ENCODE measurements at regions of chr6 and their contacts with region 1.

Region 1: GRCh38 chr6:119110601-119111548 is 32.4 kb upstream of the FAM184A start:
- DNase-seq: peak; percentile 57
- H3K4me3 Mint-ChIP-seq: no peak overlapping the region
- H3K27ac Mint-ChIP-seq: no peak overlapping the region
- H3K4me1 Mint-ChIP-seq: no peaks in the 10 kb centered on the region
- H3K27me3 Mint-ChIP-seq: no peaks in the 10 kb centered on the region
- CTCF ChIP-seq: peak; percentile 38

Region 2: GRCh38 chr6:118565311-118565960 is 545.4 kb before region 1 on chr6:
- CTCF ChIA-PET with region 1: interaction called, 8 read pairs
- intact Hi-C with region 1: loop called (anchors 1 kb)
- DNase-seq: peak; percentile 28
- H3K4me3 Mint-ChIP-seq: no peak overlapping the region
- H3K27ac Mint-ChIP-seq: no peak overlapping the region
- H3K4me1 Mint-ChIP-seq: no peaks in the 10 kb centered on the region
- H3K27me3 Mint-ChIP-seq: no peaks in the 10 kb centered on the region
- CTCF ChIP-seq: peak; percentile 27

Region 3: GRCh38 chr6:118864341-118865099 is 246.4 kb before region 1 on chr6:
- CTCF ChIA-PET with region 1: no interaction called
- intact Hi-C with region 1: no loop called
- DNase-seq: no peak
- H3K4me3 Mint-ChIP-seq: no peak overlapping the region
- H3K27ac Mint-ChIP-seq: no peak overlapping the region
- H3K4me1 Mint-ChIP-seq: peaks cover 14% of the 10 kb centered on the region
- H3K27me3 Mint-ChIP-seq: no peaks in the 10 kb centered on the region
- CTCF ChIP-seq: no peak

Region 4: GRCh38 chr6:118893807-118894424 is 217.0 kb before region 1 on chr6 and contains the start of gene ASF1A:
- CTCF ChIA-PET with region 1: interaction called, 4 read pairs
- intact Hi-C with region 1: loop called (anchors 10 kb)
- DNase-seq: peak; percentile 96
- H3K4me3 Mint-ChIP-seq: peak within 1 kb of the TSS; percentile 99
- H3K27ac Mint-ChIP-seq: peak within 1 kb of the TSS; percentile 100
- H3K4me1 Mint-ChIP-seq: peaks cover 17% of the 10 kb centered on the region
- H3K27me3 Mint-ChIP-seq: no peaks in the 10 kb centered on the region
- CTCF ChIP-seq: peak; percentile 46
- total RNA-seq, gene ASF1A: 17.2 and 19.7 TPM in 2 replicates

Region 5: GRCh38 chr6:118968416-118968815 is 142.5 kb before region 1 on chr6:
- CTCF ChIA-PET with region 1: interaction called, 11 read pairs
- intact Hi-C with region 1: loop called (anchors 1 kb)
- DNase-seq: no peak
- H3K4me3 Mint-ChIP-seq: no peak overlapping the region
- H3K27ac Mint-ChIP-seq: no peak overlapping the region
- H3K4me1 Mint-ChIP-seq: no peaks in the 10 kb centered on the region
- H3K27me3 Mint-ChIP-seq: no peaks in the 10 kb centered on the region
- CTCF ChIP-seq: no peak

Measured in Calu3 (cell line).